Adrenal gland (tissue), 19 donors: ENCODE measurements at regions of chr9 and their contacts with region 1.

Region 1: DNA sequence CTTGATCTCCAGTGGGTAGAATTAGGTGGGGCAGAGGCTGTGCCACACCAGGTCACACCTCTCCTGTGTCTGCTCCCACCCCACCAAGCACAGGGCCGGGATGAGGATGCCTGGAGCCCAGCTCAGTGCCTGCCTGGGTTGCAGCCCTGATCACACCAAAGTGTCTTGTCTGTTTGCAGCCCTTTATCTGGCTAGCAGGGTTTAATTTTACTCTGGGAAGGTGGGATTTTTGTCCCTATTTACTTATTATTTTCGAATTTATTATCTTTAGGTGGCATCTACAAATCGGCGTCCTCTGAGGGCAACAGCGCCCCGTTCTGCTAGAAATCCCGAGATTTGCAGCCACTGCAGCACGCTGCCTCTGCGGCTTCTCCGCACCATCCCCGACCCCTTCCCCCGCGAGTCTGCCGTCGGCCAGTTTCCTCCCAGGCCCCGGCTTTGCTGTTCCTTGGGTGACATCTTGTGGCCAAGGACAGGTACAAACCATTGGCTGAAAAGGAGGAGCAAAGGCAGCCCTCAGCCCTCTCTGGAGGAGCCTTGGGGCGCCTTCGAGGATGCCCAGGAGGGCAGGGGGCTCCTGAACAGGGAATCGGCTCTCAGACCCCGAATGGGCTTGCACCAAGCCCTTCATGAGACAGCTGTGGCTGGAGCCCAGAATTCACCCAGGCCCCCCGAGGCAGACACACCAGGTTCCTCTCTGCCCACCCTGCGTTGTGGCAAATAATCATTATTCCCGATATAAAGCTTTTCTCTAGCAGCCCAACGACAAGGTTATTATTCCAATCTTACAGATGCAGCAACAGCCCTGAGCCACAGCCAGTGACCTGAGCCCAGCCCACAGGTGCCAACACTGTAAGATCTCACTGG is 113.0 kb downstream of the GAPVD1 start:
- DNase-seq: peak; percentile 65 to 78 (median 73)
- H3K4me3 ChIP-seq: peak overlapping the region in 1 of 4 donors; percentile 44
- H3K27ac ChIP-seq: no peak overlapping the region
- H3K4me1 ChIP-seq: peaks cover 0 to 6% of the 10 kb centered on the region in 2 donors
- H3K27me3 ChIP-seq: no peaks in the 10 kb centered on the region
- CTCF ChIP-seq: peak; percentile 49 to 88 (median 80)
- POLR2A ChIP-seq: no peak

Region 2: DNA sequence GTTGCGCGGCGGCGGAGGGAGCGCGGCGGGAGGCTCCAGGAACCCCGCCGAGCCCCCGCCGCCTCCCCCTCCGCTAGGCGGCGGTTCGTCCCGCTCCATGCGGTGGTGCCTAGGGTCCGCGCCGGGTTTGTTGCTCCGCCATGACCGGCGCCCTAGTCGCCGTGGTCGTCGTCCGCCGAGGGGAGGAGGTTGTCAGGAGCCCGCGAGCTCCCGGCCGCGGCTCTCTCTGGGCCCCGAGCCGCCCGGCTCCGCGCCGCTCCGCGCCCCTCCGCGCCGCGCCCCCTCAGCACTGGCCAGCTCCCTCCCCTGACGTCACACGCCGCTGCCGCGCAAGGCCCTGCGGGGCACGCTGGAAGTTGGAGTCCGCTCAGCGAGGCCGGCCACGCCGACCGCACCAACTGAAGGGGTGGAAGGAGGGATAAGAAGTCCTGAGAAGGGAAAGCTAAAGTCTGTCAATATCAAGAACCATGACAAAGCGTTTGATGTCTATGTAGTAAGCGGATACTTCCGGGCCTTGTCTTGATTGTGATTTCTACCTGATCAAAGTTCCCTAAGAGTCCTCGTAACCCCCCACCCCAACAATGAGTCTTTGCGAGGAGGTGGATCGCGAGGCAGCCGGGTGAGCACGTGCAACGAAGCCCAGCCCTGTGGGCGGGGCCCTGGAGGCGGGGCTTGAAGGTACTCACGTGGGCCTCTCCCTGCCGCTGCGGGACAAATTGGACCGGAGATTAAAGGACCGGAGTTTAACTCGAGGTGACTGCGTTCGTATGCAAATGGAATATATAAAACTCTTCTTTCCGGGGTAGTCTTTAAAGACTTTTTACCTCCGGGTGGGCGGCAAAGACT is 603.4 kb before region 1 on chr9 and contains the start of gene NR6A1:
- intact Hi-C with region 1: loop called (anchors 10 kb)
- DNase-seq: peak; percentile 97 to 98 (median 98)
- H3K4me3 ChIP-seq: peak within 1 kb of the TSS in 3 of 4 donors; percentile 13 to 81 (median 71)
- H3K27ac ChIP-seq: peak within 1 kb of the TSS in 4 of 5 donors; percentile 50 to 75 (median 67)
- H3K4me1 ChIP-seq: peaks cover 5 to 12% of the 10 kb centered on the region in 2 donors
- H3K27me3 ChIP-seq: peaks cover 24% of the 10 kb centered on the region
- CTCF ChIP-seq: peak in 3 of 6 experiments; percentile 18 to 30 (median 22)
- POLR2A ChIP-seq: peak in 1 of 2 donors; percentile 31
- total RNA-seq, gene NR6A1: 0.83 to 9.8 (median 1.6) TPM

Region 3: DNA sequence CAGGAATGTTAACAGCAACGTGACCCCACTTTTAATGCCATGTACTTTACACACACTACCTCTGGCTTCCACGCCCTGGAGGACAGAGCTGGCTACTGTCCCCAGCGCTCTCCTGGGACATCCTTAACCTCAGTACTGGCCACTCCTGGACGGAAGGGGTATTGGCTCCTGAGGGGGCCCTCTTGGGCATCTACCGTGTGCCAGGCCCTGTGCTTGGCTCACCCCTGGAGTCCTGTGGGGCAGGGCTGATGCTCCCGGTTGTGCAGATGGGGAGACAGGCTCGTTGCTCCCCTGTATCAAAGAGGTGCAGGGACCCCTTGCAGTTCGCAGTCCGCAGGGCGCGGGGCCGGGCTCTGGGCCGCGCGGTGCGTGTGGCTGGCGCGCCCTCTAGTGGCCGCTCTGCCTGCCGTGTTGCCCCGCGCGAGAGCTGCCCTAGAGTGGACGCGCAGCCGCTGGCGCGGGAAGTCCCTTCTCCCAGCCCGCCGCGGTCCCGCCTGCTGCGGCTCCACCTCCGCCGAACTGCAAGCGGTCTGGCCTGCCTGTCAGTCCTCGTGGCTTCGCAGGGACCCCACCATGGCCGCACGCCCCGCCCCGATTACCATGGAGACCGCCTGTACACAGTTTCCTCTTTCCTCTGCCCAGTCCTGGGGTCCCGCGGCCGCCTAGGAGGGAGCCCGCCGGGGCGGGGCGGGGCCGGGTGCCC is 521.7 kb before region 1 on chr9 and contains the start of gene WDR38:
- intact Hi-C with region 1: loop called in 1 of 2 experiments (anchors 10 kb)
- DNase-seq: peak; percentile 73 to 87 (median 81)
- H3K4me3 ChIP-seq: peak within 1 kb of the TSS in 2 of 4 donors; percentile 7 to 36
- H3K27ac ChIP-seq: no peak within 1 kb of the TSS
- H3K4me1 ChIP-seq: peaks cover 4 to 12% of the 10 kb centered on the region in 2 donors
- H3K27me3 ChIP-seq: no peaks in the 10 kb centered on the region
- CTCF ChIP-seq: peak; percentile 82 to 100 (median 99)
- POLR2A ChIP-seq: no peak
- total RNA-seq, gene WDR38: not detected

Region 4: GRCh38 chr9:125218621-125219020 is 156.1 kb before region 1 on chr9:
- intact Hi-C with region 1: no loop called
- DNase-seq: no peak
- H3K4me3 ChIP-seq: no peak overlapping the region
- H3K27ac ChIP-seq: no peak overlapping the region
- H3K4me1 ChIP-seq: no peaks in the 10 kb centered on the region
- H3K27me3 ChIP-seq: no peaks in the 10 kb centered on the region
- CTCF ChIP-seq: no peak
- POLR2A ChIP-seq: no peak

Region 5: DNA sequence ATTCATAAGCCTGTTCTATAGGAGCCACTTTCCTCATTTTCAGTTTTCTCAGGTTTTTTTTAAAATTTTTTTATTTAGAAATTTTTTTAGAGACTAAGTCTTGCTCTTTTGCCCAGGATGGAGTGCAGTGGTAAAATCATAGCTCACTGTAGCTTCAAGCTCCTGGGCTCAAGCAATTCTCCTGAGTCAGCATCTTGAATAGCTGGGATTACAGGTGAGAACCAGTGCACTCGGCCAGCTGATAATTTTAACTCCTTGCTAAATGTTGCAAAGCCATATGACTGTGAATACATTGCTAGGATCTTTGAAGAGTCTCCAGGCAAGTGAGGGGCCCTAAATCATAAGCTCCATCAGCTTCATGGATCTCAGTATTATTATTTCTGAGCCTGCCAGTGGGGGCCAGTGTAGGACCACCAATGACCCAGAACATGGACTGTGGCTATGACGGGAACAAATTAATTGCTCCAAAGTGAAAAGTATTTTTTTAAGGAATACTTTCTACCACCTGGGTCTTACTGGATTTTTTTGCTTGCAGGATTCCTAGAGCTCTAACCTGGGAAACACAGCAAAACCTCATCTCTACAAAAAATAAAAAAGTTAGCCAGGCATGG is 118.8 kb before region 1 on chr9:
- intact Hi-C with region 1: loop called in 1 of 2 experiments (anchors 5 kb)
- DNase-seq: peak in 1 of 7 donors; percentile 30
- H3K4me3 ChIP-seq: no peak overlapping the region
- H3K27ac ChIP-seq: no peak overlapping the region
- H3K4me1 ChIP-seq: no peaks in the 10 kb centered on the region
- H3K27me3 ChIP-seq: no peaks in the 10 kb centered on the region
- CTCF ChIP-seq: peak in 5 of 6 experiments; percentile 27 to 37 (median 31)
- POLR2A ChIP-seq: no peak